A549 (cell line): ENCODE measurements at regions of chr17 and their contacts with region 1.

Region 1: DNA sequence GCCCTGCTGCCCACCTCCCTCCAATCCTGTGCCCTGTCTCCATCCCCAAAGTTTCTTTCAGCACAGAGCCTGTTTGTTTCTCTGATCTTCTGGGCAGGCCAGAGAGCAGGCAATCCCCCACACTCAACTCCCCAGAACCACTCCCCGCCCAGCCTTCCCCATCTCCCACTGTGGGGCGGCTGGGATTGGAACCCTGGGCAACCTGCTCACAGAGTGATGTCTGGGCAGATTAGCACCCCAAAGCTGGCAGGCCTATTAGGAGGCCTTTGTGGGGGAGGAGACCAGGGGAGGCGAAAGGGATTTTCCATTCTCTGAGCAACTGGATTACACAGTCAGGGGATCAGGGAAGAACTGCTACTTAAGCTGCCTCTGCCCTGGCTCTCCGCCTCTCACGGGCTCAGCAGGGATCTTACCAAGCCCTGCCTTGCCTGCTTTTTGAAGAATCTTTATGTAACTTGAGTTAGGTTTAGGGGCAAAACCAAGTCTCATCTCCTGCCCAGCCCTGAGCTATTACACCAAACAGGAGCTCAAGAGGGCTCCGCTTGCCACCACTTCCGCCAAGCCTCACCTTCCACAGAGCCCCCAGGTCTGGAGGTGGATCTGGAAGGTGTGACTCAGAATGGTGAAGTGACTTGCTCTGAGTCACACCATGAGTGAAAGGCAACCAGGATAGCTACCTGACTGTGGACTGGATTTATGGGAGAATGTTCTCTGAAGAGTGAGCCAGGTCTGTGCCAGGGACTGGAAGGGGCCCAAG is 16.0 kb upstream of the LHX1 start:
- DNase-seq: peak; percentile 89 to 98
- ATAC-seq: peak; percentile 80 to 82
- H3K4me3 ChIP-seq: peak overlapping the region; percentile 1; the same call in 1 of the 3 replicates
- H3K27ac ChIP-seq: peak overlapping the region; percentile 83 to 93
- H3K4me1 ChIP-seq: peaks cover 63% of the 10 kb centered on the region
- CTCF ChIP-seq: no peak
- EP300 ChIP-seq: no peak; a peak in 1 of 5 replicates
- POLR2A ChIP-seq: peak; percentile 23; the same call in 1 of the 2 replicates
- RAD21 ChIP-seq: 0 out of 5 replicates have a peak, but pooled peaks of 1 of the 2 experiments have one; percentile 2

Region 2: GRCh38 chr17:36910513-36910912 is 10.8 kb before region 1 on chr17:
- CTCF ChIA-PET with region 1: interaction called, 10 read pairs
- POLR2A ChIA-PET with region 1: interaction called, 3 read pairs
- DNase-seq: no peak
- ATAC-seq: no peak
- H3K4me3 ChIP-seq: no peak overlapping the region
- H3K27ac ChIP-seq: no peak overlapping the region
- H3K4me1 ChIP-seq: no peaks in the 10 kb centered on the region
- CTCF ChIP-seq: no peak
- EP300 ChIP-seq: no peak
- POLR2A ChIP-seq: no peak
- RAD21 ChIP-seq: no peak

Region 3: GRCh38 chr17:36934692-36935630 is 13.7 kb after region 1 on chr17:
- CTCF ChIA-PET with region 1: interaction called, 9 read pairs
- POLR2A ChIA-PET with region 1: interaction called, 13 read pairs
- DNase-seq: peak; percentile 69 to 83
- ATAC-seq: peak; percentile 71 to 91
- H3K4me3 ChIP-seq: peak overlapping the region; percentile 59
- H3K27ac ChIP-seq: peak overlapping the region; percentile 71 to 88
- H3K4me1 ChIP-seq: peaks cover 12% of the 10 kb centered on the region
- CTCF ChIP-seq: no peak
- EP300 ChIP-seq: no peak
- POLR2A ChIP-seq: peak; percentile 33
- RAD21 ChIP-seq: no peak

Region 4: DNA sequence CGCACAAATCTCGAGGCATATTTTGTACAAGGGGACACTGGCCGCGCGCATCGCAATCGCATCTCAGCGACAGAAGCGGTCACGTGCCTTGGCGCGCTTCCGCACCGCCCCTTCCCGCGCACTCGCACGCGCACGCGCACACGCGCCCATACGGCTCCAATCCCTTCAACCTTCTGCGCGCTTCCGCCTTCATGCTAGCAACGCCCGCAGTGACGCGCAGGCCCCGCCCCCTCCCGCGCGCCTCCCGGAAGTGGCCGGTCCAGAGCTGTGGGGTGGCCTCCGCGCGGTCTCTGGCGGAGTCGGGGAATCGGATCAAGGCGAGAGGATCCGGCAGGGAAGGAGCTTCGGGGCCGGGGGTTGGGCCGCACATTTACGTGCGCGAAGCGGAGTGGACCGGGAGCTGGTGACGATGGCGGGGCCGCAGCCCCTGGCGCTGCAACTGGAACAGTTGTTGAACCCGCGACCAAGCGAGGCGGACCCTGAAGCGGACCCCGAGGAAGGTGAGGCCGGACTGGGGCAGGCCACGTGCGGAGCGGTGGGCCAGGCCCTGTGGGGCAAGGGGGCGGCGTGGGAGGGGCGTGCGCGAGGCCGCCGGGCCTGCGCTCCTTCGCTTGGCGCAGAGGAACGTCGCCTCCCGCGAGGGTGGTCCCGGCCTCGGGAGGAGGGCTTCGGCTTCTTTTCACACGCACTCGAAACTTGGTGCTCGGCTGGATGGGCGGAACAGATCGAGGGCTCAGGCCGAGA is 27.6 kb after region 1 on chr17 and contains the start of gene AATF:
- CTCF ChIA-PET with region 1: interaction called, 4 read pairs
- POLR2A ChIA-PET with region 1: interaction called, 25 read pairs
- DNase-seq: peak; percentile 98 to 99
- ATAC-seq: peak; percentile 92 to 98
- H3K4me3 ChIP-seq: peak within 1 kb of the TSS; percentile 73
- H3K27ac ChIP-seq: peak within 1 kb of the TSS; percentile 90
- H3K4me1 ChIP-seq: peaks cover 25% of the 10 kb centered on the region
- CTCF ChIP-seq: no peak
- EP300 ChIP-seq: no peak
- POLR2A ChIP-seq: peak; percentile 88
- RAD21 ChIP-seq: no peak; a peak in 1 of 5 replicates
- polyA plus RNA-seq, gene AATF: 51.9 and 63.8 TPM in 2 replicates

Region 5: DNA sequence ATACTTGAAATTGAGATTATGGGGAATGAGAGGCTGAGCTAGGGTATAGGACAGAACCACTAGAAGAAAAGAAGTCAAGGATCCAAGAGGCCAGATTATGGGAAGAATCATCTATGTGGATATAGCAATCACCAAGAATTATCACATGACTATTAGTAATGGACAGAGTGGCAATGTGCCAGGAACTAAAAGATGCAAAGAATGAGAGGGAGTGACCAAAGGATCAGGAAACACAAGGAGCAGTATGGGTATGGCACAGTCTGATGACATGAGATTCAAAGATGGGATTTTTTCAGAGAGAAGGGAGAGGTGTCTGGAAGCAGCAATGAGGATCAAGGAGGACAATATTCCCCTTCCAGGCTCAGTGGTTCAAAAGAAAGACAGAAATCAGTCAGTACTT is 239.7 kb after region 1 on chr17:
- CTCF ChIA-PET with region 1: no interaction called
- POLR2A ChIA-PET with region 1: no interaction called
- DNase-seq: peak; percentile 20 to 37
- ATAC-seq: peak; percentile 6 to 42; a peak in 3 of 6 replicates
- H3K4me3 ChIP-seq: no peak overlapping the region
- H3K27ac ChIP-seq: no peak overlapping the region
- H3K4me1 ChIP-seq: peaks cover 5% of the 10 kb centered on the region; the same call in 1 of the 3 replicates
- CTCF ChIP-seq: no peak
- EP300 ChIP-seq: no peak
- POLR2A ChIP-seq: no peak
- RAD21 ChIP-seq: no peak